ENCODE measurements at regions of chr10 and their contacts with region 1.

Region 1: GRCh38 chr10:99430451-99431189 is at the start of gene GOT1:
- DNase-seq: peak; percentile 99
- H3K4me3 ChIP-seq: peak within 1 kb of the TSS; percentile 100
- H3K27ac ChIP-seq: peak within 1 kb of the TSS; percentile 76
- H3K4me1 ChIP-seq: peaks cover 3% of the 10 kb centered on the region; the same call in 1 of the 2 replicates
- H3K27me3 ChIP-seq: no peaks in the 10 kb centered on the region
- total RNA-seq, gene GOT1: 19.1 and 39.6 TPM in 2 replicates

Region 2: DNA sequence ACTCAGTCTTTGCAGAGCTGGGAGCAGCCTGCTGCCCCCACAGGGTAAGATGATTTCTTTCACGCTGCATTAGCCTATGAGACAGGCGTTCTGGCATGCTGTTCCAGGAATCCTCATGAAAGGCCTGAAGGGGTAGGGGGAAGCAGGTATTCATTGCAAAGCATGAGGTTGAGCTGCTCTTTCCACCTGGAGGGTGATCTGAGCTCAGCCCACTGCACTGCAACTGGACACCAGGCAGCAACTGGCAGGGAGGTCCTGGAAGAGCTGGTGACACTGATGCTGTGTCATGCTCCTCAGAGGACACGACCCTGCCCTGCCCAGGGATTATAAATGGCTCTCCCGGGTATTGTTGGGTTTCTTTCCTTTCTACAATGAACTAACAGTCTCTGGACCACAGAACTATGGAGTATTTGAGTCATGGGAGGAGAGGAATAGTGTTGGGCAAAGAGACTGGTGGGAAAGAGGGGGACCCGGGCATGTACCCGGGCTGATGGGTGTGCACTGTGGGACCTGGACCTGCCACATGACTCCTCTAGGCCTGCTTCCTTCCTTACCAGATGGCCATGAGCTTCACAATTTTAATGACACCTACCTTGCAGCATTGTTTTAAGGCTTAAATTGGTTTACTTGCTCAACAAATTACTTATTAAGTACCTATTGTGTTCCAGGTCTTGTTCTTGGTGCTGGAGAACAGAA is 165.3 kb after region 1 on chr10:
- in situ Hi-C with region 1: no loop called
- DNase-seq: peak; percentile 9
- H3K4me3 ChIP-seq: no peak overlapping the region
- H3K27ac ChIP-seq: no peak overlapping the region
- H3K4me1 ChIP-seq: no peaks in the 10 kb centered on the region
- H3K27me3 ChIP-seq: peaks cover 12% of the 10 kb centered on the region; the same call in 1 of the 2 replicates

Region 3: GRCh38 chr10:99619851-99620712 is 189.5 kb after region 1 on chr10 and contains the start of gene SLC25A28:
- in situ Hi-C with region 1: loop called (anchors 10 kb)
- DNase-seq: peak; percentile 100
- H3K4me3 ChIP-seq: peak within 1 kb of the TSS; percentile 87
- H3K27ac ChIP-seq: peak within 1 kb of the TSS; percentile 97
- H3K4me1 ChIP-seq: peaks cover 30% of the 10 kb centered on the region
- H3K27me3 ChIP-seq: no peaks in the 10 kb centered on the region
- total RNA-seq, gene SLC25A28: 22.8 and 37.6 TPM in 2 replicates

Measured in GM23248 (cell line).